Gastrocnemius medialis (tissue), 4 donors: ENCODE measurements at regions of chr4 and their contacts with region 1.

Region 1: DNA sequence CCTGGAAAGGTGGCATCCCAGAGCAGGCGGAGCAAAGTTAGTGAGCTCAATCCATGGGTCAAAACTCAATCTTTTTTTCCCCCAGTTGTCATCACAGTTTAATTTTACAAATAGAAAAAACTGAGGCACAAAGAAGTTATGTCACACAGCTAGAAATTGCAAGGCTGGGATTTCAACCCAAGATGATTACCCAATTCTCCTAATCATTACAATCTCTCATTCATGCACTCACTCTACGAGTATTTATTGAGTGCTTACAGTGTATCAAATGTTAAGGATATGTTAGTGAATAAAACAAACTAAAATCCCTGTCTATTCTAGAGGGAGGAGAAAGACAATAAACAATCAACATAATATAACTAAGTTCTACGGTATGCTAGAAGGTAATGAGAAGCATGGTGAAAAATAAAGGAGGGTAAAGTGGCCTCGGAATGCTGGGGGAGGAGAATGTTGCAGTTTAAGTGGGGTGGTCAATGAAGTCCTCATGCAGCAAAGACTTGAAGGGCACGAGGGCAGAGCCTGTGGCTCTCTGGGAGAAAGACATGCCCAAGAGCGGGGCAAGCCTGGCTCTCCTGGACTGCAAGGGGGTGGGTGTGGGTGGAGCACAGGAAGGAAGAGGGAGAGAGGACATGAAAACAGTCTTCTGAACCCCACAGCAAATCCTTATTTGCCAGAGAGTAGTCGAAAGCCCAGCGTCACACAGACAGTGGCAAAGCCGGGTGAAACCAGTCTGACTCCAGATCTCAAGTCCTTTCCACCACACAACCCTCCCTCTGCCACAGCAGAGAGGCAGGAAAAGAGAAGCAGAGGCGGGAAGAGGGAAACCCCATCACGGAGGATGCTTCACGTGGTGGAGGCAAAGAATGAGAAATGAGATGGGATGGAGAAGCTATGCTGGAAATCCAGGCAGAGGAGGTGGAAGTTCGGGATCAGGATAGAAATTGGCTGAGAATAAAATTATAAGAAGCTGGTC is 48.3 kb downstream of the RAB33B start:
- DNase-seq: no peak
- ATAC-seq: no peak
- H3K4me3 ChIP-seq: no peak overlapping the region
- H3K27ac ChIP-seq: no peak overlapping the region
- H3K4me1 ChIP-seq: peaks cover 0 to 4% of the 10 kb centered on the region in 2 donors
- H3K27me3 ChIP-seq: no peaks in the 10 kb centered on the region
- CTCF ChIP-seq: no peak
- POLR2A ChIP-seq: no peak

Region 2: DNA sequence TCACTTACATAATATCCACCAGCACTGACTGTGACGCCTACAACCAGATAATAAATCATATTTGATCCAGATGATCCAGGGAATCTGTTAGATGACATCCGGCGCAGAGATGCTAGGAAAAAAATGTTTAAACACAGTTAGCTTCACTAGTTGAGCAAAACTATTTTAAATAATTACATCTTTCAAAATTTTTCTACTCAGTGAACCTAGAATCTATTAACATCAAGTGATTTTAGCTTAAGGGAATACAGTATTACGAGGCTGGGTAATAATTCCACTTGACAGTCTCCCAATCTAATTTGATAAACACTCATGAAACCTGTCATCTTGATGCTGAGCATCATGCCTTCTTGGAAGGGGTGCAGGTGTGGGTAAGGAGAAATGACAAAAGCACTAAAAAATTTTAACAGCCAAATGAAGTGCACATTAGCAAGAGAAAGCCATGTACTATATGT is 226.9 kb before region 1 on chr4:
- in situ Hi-C with region 1: no loop called
- intact Hi-C with region 1: no loop called
- DNase-seq: no peak
- ATAC-seq: no peak
- H3K4me3 ChIP-seq: no peak overlapping the region
- H3K27ac ChIP-seq: no peak overlapping the region
- H3K4me1 ChIP-seq: no peaks in the 10 kb centered on the region
- H3K27me3 ChIP-seq: peaks cover 9 to 15% (median 13%) of the 10 kb centered on the region in 3 donors
- CTCF ChIP-seq: no peak
- POLR2A ChIP-seq: no peak

Region 3: DNA sequence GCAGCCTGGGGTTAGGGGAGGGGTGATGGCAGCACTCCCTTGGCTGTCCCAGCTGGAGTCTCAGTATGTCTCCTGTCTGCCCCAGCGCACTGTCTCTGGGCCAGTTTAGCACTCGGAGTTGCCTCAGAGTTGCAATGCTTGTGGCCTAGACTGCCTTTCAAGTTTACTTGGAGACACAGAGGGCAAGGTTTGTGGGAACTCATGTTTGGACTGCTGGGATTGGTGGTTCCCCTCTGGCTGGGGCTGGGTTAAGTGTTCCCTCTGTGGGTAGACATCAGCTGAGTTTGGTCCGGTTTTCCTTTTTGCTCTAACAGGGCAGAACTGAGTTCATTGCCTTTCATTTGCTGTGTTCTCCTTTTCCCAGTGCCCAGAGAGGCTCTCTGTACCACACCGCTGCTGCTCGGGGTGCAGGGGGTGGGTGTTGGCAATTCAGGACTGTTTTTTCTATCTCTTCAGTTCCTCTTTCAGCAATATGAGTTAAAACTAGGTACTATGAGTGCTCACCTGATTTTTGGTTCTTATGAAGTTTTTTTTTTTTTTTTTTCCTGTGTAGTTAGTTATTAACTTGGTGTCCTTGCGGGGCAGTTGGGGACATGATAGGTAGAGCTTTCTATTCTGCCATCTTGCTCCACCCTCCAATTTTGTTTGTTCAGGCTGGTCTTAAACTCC is 31.1 kb before region 1 on chr4:
- in situ Hi-C with region 1: no loop called
- intact Hi-C with region 1: no loop called
- DNase-seq: no peak
- ATAC-seq: no peak
- H3K4me3 ChIP-seq: no peak overlapping the region
- H3K27ac ChIP-seq: no peak overlapping the region
- H3K4me1 ChIP-seq: no peaks in the 10 kb centered on the region
- H3K27me3 ChIP-seq: no peaks in the 10 kb centered on the region
- CTCF ChIP-seq: no peak
- POLR2A ChIP-seq: no peak

Region 4: GRCh38 chr4:139530833-139531427 is 28.7 kb after region 1 on chr4:
- in situ Hi-C with region 1: no loop called
- intact Hi-C with region 1: loop called (anchors 1 kb)
- DNase-seq: peak in 1 of 2 donors; percentile 54
- ATAC-seq: peak; percentile 27 to 51
- H3K4me3 ChIP-seq: no peak overlapping the region
- H3K27ac ChIP-seq: peak overlapping the region; percentile 4 to 92 (median 50)
- H3K4me1 ChIP-seq: peaks cover 37 to 40% of the 10 kb centered on the region in 2 donors
- H3K27me3 ChIP-seq: no peaks in the 10 kb centered on the region
- CTCF ChIP-seq: peak; percentile 44 to 68 (median 64)
- POLR2A ChIP-seq: no peak

Region 5: DNA sequence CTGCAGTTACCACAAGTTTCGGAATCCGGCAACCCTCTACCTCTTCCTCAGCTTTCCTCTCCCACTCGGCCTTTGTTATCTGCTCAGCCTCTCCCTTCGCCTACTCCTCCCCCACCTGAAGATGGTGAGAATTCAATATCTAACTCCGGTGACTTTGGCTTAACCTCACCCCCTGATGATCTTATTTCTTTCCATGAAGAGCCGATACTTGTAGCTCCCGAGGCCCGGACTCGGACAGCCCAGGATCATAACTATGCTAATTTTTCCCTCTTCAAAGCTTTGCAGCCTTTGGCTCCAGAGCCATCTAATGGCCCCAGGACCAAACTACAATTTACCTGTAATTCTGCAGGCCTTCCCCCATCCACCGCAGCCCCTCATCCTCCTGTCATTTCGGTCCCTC is 131.4 kb after region 1 on chr4:
- in situ Hi-C with region 1: no loop called
- intact Hi-C with region 1: loop called (anchors 5 kb)
- DNase-seq: no peak
- ATAC-seq: peak; percentile 75 to 79
- H3K4me3 ChIP-seq: peak overlapping the region in 2 of 4 donors; percentile 22
- H3K27ac ChIP-seq: no peak overlapping the region
- H3K4me1 ChIP-seq: peaks cover 0 to 6% of the 10 kb centered on the region in 2 donors
- H3K27me3 ChIP-seq: no peaks in the 10 kb centered on the region
- CTCF ChIP-seq: peak in 4 of 5 experiments; percentile 20 to 46 (median 42)
- POLR2A ChIP-seq: no peak